PC-3 (cell line): ENCODE measurements at regions of chr2 and their contacts with region 1.

Region 1: GRCh38 chr2:41869542-41870264 is 178.1 kb upstream of the PKDCC start:
- DNase-seq: peak; percentile 79
- ATAC-seq: peak; percentile 92
- H3K4me3 ChIP-seq: no peak overlapping the region
- H3K27ac ChIP-seq: no peak overlapping the region
- H3K4me1 ChIP-seq: peaks cover 5% of the 10 kb centered on the region
- H3K27me3 ChIP-seq: no peaks in the 10 kb centered on the region
- CTCF ChIP-seq: peak; percentile 90

Region 2: GRCh38 chr2:41853427-41854216 is 16.1 kb before region 1 on chr2:
- CTCF ChIA-PET with region 1: interaction called, 11 read pairs
- POLR2A ChIA-PET with region 1: no interaction called
- intact Hi-C with region 1: loop called (anchors 1 kb)
- DNase-seq: peak; percentile 82
- ATAC-seq: peak; percentile 63
- H3K4me3 ChIP-seq: no peak overlapping the region
- H3K27ac ChIP-seq: no peak overlapping the region
- H3K4me1 ChIP-seq: no peaks in the 10 kb centered on the region; the same call in 1 of the 2 replicates
- H3K27me3 ChIP-seq: no peaks in the 10 kb centered on the region
- CTCF ChIP-seq: peak; percentile 94